ENCODE measurements at regions of chr2 and their contacts with region 1.

Region 1: GRCh38 chr2:44107085-44107740 is 61.5 kb upstream of the PPM1B start:
- DNase-seq: peak; percentile 47
- ATAC-seq: peak; percentile 79
- H3K4me3 ChIP-seq: no peak overlapping the region
- H3K27ac ChIP-seq: no peak overlapping the region
- H3K4me1 ChIP-seq: peaks cover 10% of the 10 kb centered on the region
- H3K27me3 ChIP-seq: no peaks in the 10 kb centered on the region
- CTCF ChIP-seq: no peak
- EP300 ChIP-seq: no peak
- POLR2A ChIP-seq: no peak
- RAD21 ChIP-seq: no peak

Region 2: GRCh38 chr2:44120428-44120827 is 13.2 kb after region 1 on chr2:
- CTCF ChIA-PET with region 1: no interaction called
- POLR2A ChIA-PET with region 1: no interaction called
- RAD21 ChIA-PET with region 1: no interaction called
- SMC1A ChIA-PET with region 1: interaction called, 11 read pairs
- in situ Hi-C with region 1: no loop called
- intact Hi-C with region 1: no loop called
- DNase-seq: no peak
- ATAC-seq: peak; percentile 51
- H3K4me3 ChIP-seq: no peak overlapping the region
- H3K27ac ChIP-seq: no peak overlapping the region
- H3K4me1 ChIP-seq: peaks cover 3% of the 10 kb centered on the region; the same call in 1 of the 2 replicates
- H3K27me3 ChIP-seq: no peaks in the 10 kb centered on the region
- CTCF ChIP-seq: no peak
- EP300 ChIP-seq: no peak
- POLR2A ChIP-seq: no peak
- RAD21 ChIP-seq: no peak

Region 3: GRCh38 chr2:44136186-44136585 is 29.0 kb after region 1 on chr2:
- CTCF ChIA-PET with region 1: no interaction called
- POLR2A ChIA-PET with region 1: no interaction called
- RAD21 ChIA-PET with region 1: no interaction called
- SMC1A ChIA-PET with region 1: no interaction called
- in situ Hi-C with region 1: no loop called
- intact Hi-C with region 1: no loop called
- DNase-seq: no peak
- ATAC-seq: no peak
- H3K4me3 ChIP-seq: no peak overlapping the region
- H3K27ac ChIP-seq: no peak overlapping the region
- H3K4me1 ChIP-seq: no peaks in the 10 kb centered on the region
- H3K27me3 ChIP-seq: no peaks in the 10 kb centered on the region
- CTCF ChIP-seq: no peak
- EP300 ChIP-seq: no peak
- POLR2A ChIP-seq: no peak
- RAD21 ChIP-seq: no peak